CD4-positive, alpha-beta memory T cell (primary cell): ENCODE measurements at regions of chr11 and their contacts with region 1.

Region 1: GRCh38 chr11:75270896-75271418 is 30.4 kb downstream of the TPBGL start:
- DNase-seq: peak in 4 of 5 donors; percentile 22 to 32 (median 31)
- H3K4me3 ChIP-seq: no peak overlapping the region
- H3K4me3 Mint-ChIP-seq: no peak overlapping the region
- H3K27ac ChIP-seq: no peak overlapping the region
- H3K27ac Mint-ChIP-seq: peak overlapping the region in 6 of 7 donors; percentile 48 to 92 (median 70)
- H3K4me1 ChIP-seq: peaks cover 42% of the 10 kb centered on the region
- H3K4me1 Mint-ChIP-seq: peaks cover 22 to 50% (median 33%) of the 10 kb centered on the region in 4 donors
- H3K27me3 ChIP-seq: no peaks in the 10 kb centered on the region
- H3K27me3 Mint-ChIP-seq: no peaks in the 10 kb centered on the region

Region 2: GRCh38 chr11:75142714-75143419 is 128.1 kb before region 1 on chr11:
- CTCF ChIA-PET with region 1: interaction called, 304 read pairs
- POLR2A ChIA-PET with region 1: interaction called, 22 read pairs
- intact Hi-C with region 1: loop called (anchors 1 kb)
- DNase-seq: peak; percentile 44 to 88 (median 57)
- H3K4me3 ChIP-seq: no peak overlapping the region
- H3K4me3 Mint-ChIP-seq: peak overlapping the region in 7 of 8 donors; percentile 58 to 75 (median 73)
- H3K27ac ChIP-seq: peak overlapping the region; percentile 22
- H3K27ac Mint-ChIP-seq: peak overlapping the region; percentile 45 to 93 (median 89)
- H3K4me1 ChIP-seq: peaks cover 37% of the 10 kb centered on the region
- H3K4me1 Mint-ChIP-seq: peaks cover 25 to 40% (median 34%) of the 10 kb centered on the region in 4 donors
- H3K27me3 ChIP-seq: no peaks in the 10 kb centered on the region
- H3K27me3 Mint-ChIP-seq: peaks cover 0 to 1% of the 10 kb centered on the region in 2 donors

Region 3: GRCh38 chr11:75328426-75329277 is 57.7 kb after region 1 on chr11:
- CTCF ChIA-PET with region 1: interaction called, 41 read pairs
- POLR2A ChIA-PET with region 1: interaction called, 11 read pairs
- intact Hi-C with region 1: no loop called
- DNase-seq: peak; percentile 57 to 68 (median 66)
- H3K4me3 ChIP-seq: peak overlapping the region; percentile 10 to 11
- H3K4me3 Mint-ChIP-seq: peak overlapping the region; percentile 25 to 69 (median 56)
- H3K27ac ChIP-seq: peak overlapping the region; percentile 25
- H3K27ac Mint-ChIP-seq: peak overlapping the region; percentile 65 to 91 (median 86)
- H3K4me1 ChIP-seq: peaks cover 54% of the 10 kb centered on the region
- H3K4me1 Mint-ChIP-seq: peaks cover 44 to 78% (median 59%) of the 10 kb centered on the region in 4 donors
- H3K27me3 ChIP-seq: no peaks in the 10 kb centered on the region
- H3K27me3 Mint-ChIP-seq: no peaks in the 10 kb centered on the region

Region 4: DNA sequence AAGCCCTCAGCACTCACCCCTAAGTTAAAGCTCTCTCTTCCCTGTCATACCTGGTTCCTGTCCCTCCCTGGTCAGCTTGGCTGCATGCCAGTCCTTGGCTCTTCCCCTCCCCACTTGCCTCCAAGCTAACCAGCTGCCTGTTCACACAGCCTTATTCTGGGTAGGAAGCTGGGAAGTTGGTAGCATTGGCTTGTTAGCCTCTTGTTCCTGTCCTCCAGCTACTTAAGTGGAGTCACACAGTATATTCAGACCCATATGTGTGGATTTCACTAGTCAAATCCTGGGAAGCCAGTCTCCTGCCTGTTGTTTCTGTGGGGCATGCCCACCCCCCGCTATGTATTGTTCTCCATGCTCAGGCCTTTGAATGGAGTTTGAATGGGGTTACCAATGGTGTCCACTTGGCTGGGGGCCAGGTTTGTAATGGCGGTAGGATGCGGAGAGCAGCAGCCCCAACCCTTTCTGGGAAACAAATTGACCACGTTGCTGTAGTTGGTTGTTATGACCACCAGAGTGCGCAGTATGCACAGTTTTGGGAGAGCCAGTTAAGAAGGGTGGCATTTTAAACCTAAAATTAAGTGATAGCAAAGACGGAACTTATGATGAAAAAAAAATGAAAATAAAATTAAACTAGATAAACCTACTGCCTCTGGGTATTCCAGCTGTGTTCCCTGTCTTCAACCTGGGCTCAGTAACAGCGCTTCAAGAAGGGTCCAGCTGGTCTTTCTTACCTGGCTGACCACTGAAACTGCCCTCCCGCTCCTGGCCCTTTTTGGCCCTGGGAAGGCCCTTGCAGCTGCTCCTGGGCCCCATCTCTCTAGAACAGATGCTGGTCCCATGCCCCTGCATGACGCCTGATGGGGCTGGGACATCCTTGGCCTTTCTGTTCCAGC is 117.7 kb after region 1 on chr11:
- CTCF ChIA-PET with region 1: interaction called, 614 read pairs
- POLR2A ChIA-PET with region 1: interaction called, 118 read pairs
- intact Hi-C with region 1: loop called (anchors 1 kb)
- DNase-seq: peak; percentile 69 to 76 (median 74)
- H3K4me3 ChIP-seq: no peak overlapping the region
- H3K4me3 Mint-ChIP-seq: no peak overlapping the region
- H3K27ac ChIP-seq: no peak overlapping the region
- H3K27ac Mint-ChIP-seq: no peak overlapping the region
- H3K4me1 ChIP-seq: peaks cover 17% of the 10 kb centered on the region
- H3K4me1 Mint-ChIP-seq: peaks cover 4 to 13% (median 7%) of the 10 kb centered on the region in 4 donors
- H3K27me3 ChIP-seq: no peaks in the 10 kb centered on the region
- H3K27me3 Mint-ChIP-seq: peaks cover 4% of the 10 kb centered on the region in 2 donors

Region 5: DNA sequence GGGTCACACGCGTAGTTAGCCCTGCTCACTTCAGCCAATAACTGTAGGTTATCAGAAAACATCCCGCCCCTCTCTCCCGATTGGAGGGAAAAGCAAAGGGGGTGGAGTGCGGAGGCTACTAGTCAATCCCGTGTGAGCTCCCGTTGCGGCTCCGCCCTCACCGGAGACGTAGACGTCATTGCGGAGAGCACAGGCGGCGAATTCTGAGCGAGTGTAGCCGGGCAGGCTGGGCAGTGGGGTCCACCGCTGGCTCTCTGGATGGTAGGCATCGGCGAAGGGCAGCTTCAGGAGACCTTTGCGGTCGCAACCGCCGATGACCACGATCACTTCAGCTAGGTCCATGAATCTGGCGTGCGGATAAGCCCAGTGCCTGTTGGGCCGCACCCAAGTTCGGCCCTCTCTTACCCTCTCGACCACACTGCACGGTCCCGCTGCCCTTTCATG is 157.3 kb after region 1 on chr11:
- CTCF ChIA-PET with region 1: interaction called, 3 read pairs
- POLR2A ChIA-PET with region 1: interaction called, 13 read pairs
- intact Hi-C with region 1: no loop called
- DNase-seq: peak; percentile 46 to 82 (median 55)
- H3K4me3 ChIP-seq: peak overlapping the region in 1 of 2 donors; percentile 16
- H3K4me3 Mint-ChIP-seq: peak overlapping the region in 7 of 8 donors; percentile 10 to 82 (median 65)
- H3K27ac ChIP-seq: no peak overlapping the region
- H3K27ac Mint-ChIP-seq: peak overlapping the region; percentile 57 to 90 (median 68)
- H3K4me1 ChIP-seq: peaks cover 25% of the 10 kb centered on the region
- H3K4me1 Mint-ChIP-seq: peaks cover 14 to 42% (median 22%) of the 10 kb centered on the region in 4 donors
- H3K27me3 ChIP-seq: peaks cover 6% of the 10 kb centered on the region
- H3K27me3 Mint-ChIP-seq: peaks cover 7 to 24% of the 10 kb centered on the region in 2 donors

Region 6: DNA sequence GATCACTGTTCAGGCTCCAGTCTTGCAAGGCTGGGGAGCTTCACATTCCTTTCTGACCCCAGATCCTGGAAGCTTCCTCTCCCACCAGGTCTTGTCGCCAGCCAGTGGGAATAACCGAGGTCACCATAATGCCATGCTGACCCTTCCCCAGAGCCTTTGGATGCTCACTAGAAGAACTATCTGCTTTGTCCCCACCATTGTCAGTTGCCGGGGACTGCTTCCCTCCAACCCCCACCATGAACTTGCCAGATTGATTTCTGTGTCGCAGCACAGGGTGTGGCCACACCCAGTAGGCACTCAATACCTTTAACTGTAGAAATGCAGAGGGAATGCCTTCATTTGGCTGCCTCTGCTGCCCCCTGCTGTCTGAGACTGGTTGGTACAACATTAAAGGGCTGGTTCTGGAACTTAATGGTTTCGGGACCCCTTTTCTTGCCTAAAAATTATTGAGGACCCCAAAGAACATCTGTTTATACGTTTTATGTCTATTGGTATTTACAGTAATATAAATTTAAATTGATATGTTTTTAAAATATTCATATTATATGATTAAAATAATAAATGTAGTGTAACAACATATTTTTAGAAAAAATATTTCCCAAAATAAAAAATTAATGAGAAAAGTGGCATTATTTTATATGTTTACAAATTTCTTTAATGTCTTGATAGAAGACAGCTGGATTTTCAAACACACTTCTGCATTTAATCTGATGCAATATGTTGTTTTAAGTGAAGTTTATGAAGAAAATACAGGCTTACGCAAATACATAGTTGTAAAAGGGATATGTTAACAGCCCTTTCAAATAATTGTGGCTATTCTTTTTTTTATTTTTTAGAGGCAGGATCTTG is 261.5 kb after region 1 on chr11:
- CTCF ChIA-PET with region 1: interaction called, 4 read pairs
- POLR2A ChIA-PET with region 1: interaction called, 6 read pairs
- intact Hi-C with region 1: loop called (anchors 1 kb)
- DNase-seq: peak; percentile 77 to 83 (median 80)
- H3K4me3 ChIP-seq: no peak overlapping the region
- H3K4me3 Mint-ChIP-seq: peak overlapping the region in 7 of 8 donors; percentile 20 to 61 (median 35)
- H3K27ac ChIP-seq: no peak overlapping the region
- H3K27ac Mint-ChIP-seq: peak overlapping the region in 6 of 7 donors; percentile 8 to 86 (median 75)
- H3K4me1 ChIP-seq: peaks cover 30% of the 10 kb centered on the region
- H3K4me1 Mint-ChIP-seq: peaks cover 28 to 53% (median 33%) of the 10 kb centered on the region in 4 donors
- H3K27me3 ChIP-seq: no peaks in the 10 kb centered on the region
- H3K27me3 Mint-ChIP-seq: no peaks in the 10 kb centered on the region